Activated B cell treated with CpG ODN at 0.5 μM for 24 hours (primary cell): ENCODE measurements at regions of chr6 and their contacts with region 1.

Region 1: DNA sequence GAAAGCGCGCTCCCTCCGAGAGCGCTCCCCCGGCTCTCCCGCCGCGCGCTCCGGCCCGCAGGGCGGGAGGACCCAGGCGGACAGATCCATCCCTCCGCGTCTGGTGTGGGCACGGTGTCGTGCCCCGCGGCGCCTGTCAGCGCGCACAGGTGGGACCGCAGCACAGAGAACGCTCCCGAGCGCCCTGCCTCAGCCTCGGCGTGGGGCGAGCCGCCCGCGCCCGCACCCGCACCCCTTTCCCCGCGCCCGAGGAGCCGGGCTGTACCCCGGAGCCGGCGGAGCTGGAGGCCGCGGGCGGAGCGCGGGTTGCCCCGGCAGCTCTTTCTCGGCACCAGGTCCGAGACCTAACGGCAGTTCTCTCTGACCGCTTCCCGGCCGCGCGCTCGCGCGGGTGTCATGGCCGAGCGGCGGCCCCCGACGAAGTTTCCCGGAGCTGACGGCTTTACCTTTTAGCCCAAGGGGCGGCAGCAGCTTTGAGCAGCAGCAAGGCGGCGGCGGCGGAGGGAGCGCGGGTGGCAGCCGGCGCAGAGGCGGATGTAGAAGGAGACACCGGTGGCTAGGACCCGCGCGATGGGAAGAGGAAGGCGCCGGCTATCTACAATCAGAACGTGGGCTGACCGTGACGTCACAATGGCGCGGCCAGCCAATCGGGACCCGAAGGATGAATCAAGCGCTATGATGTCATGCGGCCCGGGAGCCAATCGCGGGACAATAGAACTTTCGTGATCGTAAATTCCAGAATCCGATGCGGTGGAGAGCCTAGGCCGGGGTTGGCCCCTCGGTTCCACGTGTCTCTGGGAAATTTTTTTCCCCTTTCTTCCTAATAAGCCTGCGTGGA is at the start of gene ELOVL5:
- DNase-seq: peak; percentile 92
- ATAC-seq: peak; percentile 78
- H3K4me3 Mint-ChIP-seq: peak within 1 kb of the TSS; percentile 94
- H3K27ac Mint-ChIP-seq: peak within 1 kb of the TSS; percentile 97
- H3K4me1 Mint-ChIP-seq: peaks cover 52% of the 10 kb centered on the region
- H3K27me3 Mint-ChIP-seq: no peaks in the 10 kb centered on the region
- CTCF ChIP-seq: no peak
- total RNA-seq, gene ELOVL5: 109 and 127 TPM in 2 replicates

Region 2: GRCh38 chr6:53233309-53233708 is 115.3 kb before region 1 on chr6:
- CTCF ChIA-PET with region 1: no interaction called
- POLR2A ChIA-PET with region 1: interaction called, 9 read pairs
- intact Hi-C with region 1: loop called (anchors 5 kb)
- DNase-seq: no peak
- ATAC-seq: no peak
- H3K4me3 Mint-ChIP-seq: no peak overlapping the region
- H3K27ac Mint-ChIP-seq: peak overlapping the region; percentile 97
- H3K4me1 Mint-ChIP-seq: peaks cover 80% of the 10 kb centered on the region
- H3K27me3 Mint-ChIP-seq: no peaks in the 10 kb centered on the region
- CTCF ChIP-seq: no peak

Region 3: DNA sequence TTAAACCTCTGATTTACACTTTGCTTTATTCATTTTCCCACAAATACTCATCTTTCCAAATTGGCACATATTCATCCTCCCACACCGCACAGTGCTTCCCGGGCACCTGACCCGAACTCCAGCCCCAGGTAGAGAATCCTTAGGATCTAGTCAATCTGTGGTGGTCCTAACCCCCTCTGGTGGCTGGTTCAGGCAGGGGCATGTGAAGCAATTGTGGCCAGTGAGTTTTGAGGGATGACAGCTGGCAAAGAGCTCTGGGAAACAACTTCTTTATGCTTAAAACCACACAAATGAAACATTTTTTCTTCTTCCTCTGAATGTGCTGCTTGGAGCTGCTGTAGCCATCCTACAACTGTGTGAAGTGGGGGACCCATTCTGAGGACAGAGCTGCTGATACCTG is 54.5 kb before region 1 on chr6:
- CTCF ChIA-PET with region 1: interaction called, 6 read pairs
- POLR2A ChIA-PET with region 1: interaction called, 8 read pairs
- intact Hi-C with region 1: loop called (anchors 2 kb)
- DNase-seq: no peak
- ATAC-seq: peak; percentile 62
- H3K4me3 Mint-ChIP-seq: no peak overlapping the region
- H3K27ac Mint-ChIP-seq: peak overlapping the region; percentile 80
- H3K4me1 Mint-ChIP-seq: peaks cover 89% of the 10 kb centered on the region
- H3K27me3 Mint-ChIP-seq: no peaks in the 10 kb centered on the region
- CTCF ChIP-seq: peak; percentile 26

Region 4: GRCh38 chr6:53309059-53309900 is 39.3 kb before region 1 on chr6:
- CTCF ChIA-PET with region 1: no interaction called
- POLR2A ChIA-PET with region 1: interaction called, 10 read pairs
- intact Hi-C with region 1: loop called (anchors 2 kb)
- DNase-seq: no peak
- ATAC-seq: peak; percentile 34
- H3K4me3 Mint-ChIP-seq: peak overlapping the region; percentile 57
- H3K27ac Mint-ChIP-seq: peak overlapping the region; percentile 92
- H3K4me1 Mint-ChIP-seq: peaks cover 84% of the 10 kb centered on the region
- H3K27me3 Mint-ChIP-seq: no peaks in the 10 kb centered on the region
- CTCF ChIP-seq: no peak

Region 5: GRCh38 chr6:53335208-53335994 is 13.2 kb before region 1 on chr6:
- CTCF ChIA-PET with region 1: interaction called, 4 read pairs
- POLR2A ChIA-PET with region 1: interaction called, 54 read pairs
- intact Hi-C with region 1: loop called (anchors 1 kb)
- DNase-seq: peak; percentile 56
- ATAC-seq: peak; percentile 85
- H3K4me3 Mint-ChIP-seq: peak overlapping the region; percentile 84
- H3K27ac Mint-ChIP-seq: peak overlapping the region; percentile 97
- H3K4me1 Mint-ChIP-seq: peaks cover 93% of the 10 kb centered on the region
- H3K27me3 Mint-ChIP-seq: no peaks in the 10 kb centered on the region
- CTCF ChIP-seq: no peak

Region 6: GRCh38 chr6:53410508-53411258 is 62.1 kb after region 1 on chr6:
- CTCF ChIA-PET with region 1: interaction called, 6 read pairs
- POLR2A ChIA-PET with region 1: interaction called, 3 read pairs
- intact Hi-C with region 1: loop called (anchors 1 kb)
- DNase-seq: peak; percentile 20
- ATAC-seq: peak; percentile 98
- H3K4me3 Mint-ChIP-seq: peak overlapping the region; percentile 70
- H3K27ac Mint-ChIP-seq: peak overlapping the region; percentile 82
- H3K4me1 Mint-ChIP-seq: peaks cover 9% of the 10 kb centered on the region
- H3K27me3 Mint-ChIP-seq: no peaks in the 10 kb centered on the region
- CTCF ChIP-seq: no peak